KBM-7 (cell line): ENCODE measurements at regions of chr11 and their contacts with region 1.

Region 1: GRCh38 chr11:9613118-9613829 is 39.8 kb downstream of the WEE1 start:
- DNase-seq: peak; percentile 92

Region 2: DNA sequence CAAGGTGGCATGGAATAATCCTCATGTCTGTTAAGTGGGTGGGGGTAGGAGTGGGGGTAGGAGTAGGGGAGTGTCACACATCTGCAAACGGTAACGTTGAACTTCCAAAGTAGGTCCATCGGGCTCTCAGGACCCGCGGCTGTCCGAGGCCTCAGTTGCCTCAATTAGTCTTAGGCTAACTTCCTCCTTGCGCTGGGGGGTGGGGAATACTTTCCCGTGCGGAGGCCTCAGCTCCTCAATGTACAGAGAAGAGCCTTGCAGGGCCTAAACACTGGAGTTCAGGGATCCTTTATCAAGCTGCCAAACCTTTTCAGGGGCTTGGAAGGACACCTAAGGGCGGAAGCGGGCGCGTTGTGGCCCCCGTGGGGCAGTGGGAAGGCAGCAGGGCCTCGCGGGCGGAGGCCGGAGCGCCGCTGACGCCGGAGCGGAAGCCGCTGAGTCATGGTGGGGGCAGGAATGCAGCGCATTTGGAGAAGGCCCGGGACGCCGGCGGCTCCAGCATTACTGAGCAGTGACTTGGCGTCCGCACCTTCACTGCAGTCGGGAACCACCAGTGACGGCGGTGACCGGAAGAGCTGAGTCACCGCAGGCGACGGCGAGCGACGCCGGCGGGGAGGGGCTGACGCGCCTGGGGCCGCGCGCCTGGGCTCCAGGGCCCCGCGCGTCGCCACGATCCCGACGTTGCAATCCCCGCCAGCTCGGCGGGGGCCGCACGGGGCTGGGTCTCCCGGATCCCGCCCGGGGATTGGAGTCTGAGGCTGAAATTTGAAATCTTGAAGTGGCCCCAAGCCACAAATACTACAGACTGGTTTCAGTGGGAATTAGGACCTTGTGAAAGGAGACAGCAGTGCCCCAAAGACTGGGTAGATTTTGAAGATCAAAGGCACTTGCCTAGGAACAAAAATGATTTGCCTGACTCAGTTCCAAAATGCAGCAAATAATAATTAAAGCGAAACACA is 249.0 kb before region 1 on chr11:
- in situ Hi-C with region 1: no loop called
- DNase-seq: peak; percentile 96

Region 3: GRCh38 chr11:9473408-9473807 is 139.9 kb before region 1 on chr11:
- in situ Hi-C with region 1: no loop called
- DNase-seq: no peak

Region 4: GRCh38 chr11:9663699-9664275 is 50.5 kb after region 1 on chr11 and contains the start of gene SWAP70:
- in situ Hi-C with region 1: no loop called
- DNase-seq: peak; percentile 62

Region 5: DNA sequence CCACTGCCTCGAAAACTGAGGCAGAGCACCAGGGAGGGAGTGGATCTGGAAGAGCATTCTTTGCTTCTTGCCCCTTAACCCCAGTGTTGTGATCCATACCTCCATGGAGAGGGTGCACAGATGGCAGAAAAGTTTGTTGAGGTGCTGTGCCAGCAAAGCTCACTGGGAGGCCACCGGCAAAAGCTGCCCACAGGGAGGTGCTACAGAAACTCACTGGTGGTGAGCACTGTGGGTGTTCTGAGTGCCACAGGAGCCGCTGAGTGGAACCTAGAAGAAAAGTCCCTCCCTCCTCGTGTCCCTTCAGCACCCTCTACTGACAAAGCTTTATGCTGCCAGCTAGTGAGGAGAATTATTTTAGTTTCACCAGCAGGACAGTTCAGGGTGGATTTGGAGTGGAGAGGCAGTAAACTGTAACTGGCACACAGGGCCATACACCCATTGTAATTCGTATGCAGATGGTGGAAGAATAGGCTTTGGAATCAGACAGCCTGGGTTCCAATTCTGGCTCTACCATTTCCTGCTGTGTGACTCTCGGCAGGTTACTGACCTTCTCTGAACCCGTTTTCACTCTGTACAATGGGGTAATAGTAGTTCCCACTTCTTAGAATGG is 135.2 kb after region 1 on chr11:
- in situ Hi-C with region 1: loop called (anchors 10 kb)
- DNase-seq: peak; percentile 91